Left cardiac atrium (tissue), 4 donors: ENCODE measurements at regions of chr11 and their contacts with region 1.

Region 1: GRCh38 chr11:20387241-20388095 is at the start of gene PRMT3:
- DNase-seq: peak; percentile 97
- ATAC-seq: peak; percentile 98
- total RNA-seq, gene PRMT3: 12.1 to 12.5 TPM

Region 2: GRCh38 chr11:20609727-20610707 is 222.5 kb after region 1 on chr11:
- intact Hi-C with region 1: loop called (anchors 2 to 10 kb)
- DNase-seq: peak; percentile 81
- ATAC-seq: peak; percentile 91 to 96